Activated CD4-positive, alpha-beta T cell treated with anti-CD3 and anti-CD28 coated beads for 36 hours (primary cell): ENCODE measurements at regions of chr19 and their contacts with region 1.

Region 1: DNA sequence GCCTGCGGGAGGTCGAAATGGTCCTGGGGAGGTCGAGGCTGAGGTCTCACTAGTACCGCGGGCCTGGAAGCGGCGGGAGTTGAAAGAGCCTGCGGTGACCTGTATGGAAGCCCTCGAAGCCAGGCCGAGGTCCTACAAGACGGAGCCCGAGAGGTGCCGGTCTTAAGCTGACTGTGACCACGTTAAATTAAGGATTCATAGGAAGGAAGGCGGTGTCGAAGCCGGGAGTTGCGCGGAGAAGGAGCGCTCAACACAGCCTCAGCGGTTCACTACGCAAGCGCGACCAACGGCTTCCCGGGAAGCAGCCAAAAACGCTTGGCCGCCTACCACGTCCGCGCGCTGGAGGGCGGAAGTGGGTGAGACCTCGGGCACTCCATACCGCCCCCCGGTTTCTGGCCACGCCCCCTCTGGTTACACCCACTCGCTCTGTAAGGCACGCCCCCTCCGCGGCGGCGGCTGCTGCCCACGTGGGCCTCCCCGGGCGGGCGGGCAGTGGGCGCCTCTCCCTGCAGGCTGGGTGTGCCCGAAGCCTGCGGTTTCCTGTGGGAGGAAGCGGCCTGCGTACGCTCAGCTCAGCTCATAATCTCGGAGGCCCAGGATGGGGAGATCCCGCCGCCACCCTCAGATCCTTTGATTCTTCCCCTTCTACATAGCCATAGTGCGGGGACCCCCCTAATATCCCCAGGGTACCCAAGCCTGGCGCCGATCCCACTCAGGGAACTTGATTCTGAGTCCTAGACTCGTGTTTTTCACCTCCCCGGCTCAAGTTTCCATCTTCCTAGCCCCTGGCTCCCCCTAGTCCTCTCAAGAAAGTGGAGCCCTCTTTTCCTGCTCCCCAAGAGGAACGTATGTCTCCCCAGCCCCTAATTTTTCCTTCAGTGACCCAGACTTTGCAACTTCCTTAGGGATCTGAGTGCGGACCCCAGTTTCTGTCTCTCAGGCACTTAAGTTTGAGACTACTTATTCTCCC is 3.4 kb upstream of the EMP3 start:
- DNase-seq: peak; percentile 99
- ATAC-seq: peak; percentile 68
- H3K4me3 Mint-ChIP-seq: peak overlapping the region; percentile 82
- H3K27ac Mint-ChIP-seq: peak overlapping the region; percentile 97
- H3K4me1 Mint-ChIP-seq: peaks cover 56% of the 10 kb centered on the region
- H3K27me3 Mint-ChIP-seq: no peaks in the 10 kb centered on the region

Region 2: GRCh38 chr19:47600246-47601179 is 721.4 kb before region 1 on chr19:
- CTCF ChIA-PET with region 1: no interaction called
- POLR2A ChIA-PET with region 1: no interaction called
- intact Hi-C with region 1: loop called in 1 of 2 experiments (anchors 10 kb)
- DNase-seq: peak; percentile 100
- ATAC-seq: peak; percentile 98
- H3K4me3 Mint-ChIP-seq: peak overlapping the region; percentile 79
- H3K27ac Mint-ChIP-seq: peak overlapping the region; percentile 89
- H3K4me1 Mint-ChIP-seq: peaks cover 31% of the 10 kb centered on the region
- H3K27me3 Mint-ChIP-seq: no peaks in the 10 kb centered on the region

Region 3: GRCh38 chr19:47707135-47707925 is 614.6 kb before region 1 on chr19:
- CTCF ChIA-PET with region 1: no interaction called
- POLR2A ChIA-PET with region 1: no interaction called
- intact Hi-C with region 1: no loop called
- DNase-seq: peak; percentile 91
- ATAC-seq: peak; percentile 99
- H3K4me3 Mint-ChIP-seq: no peak overlapping the region
- H3K27ac Mint-ChIP-seq: no peak overlapping the region
- H3K4me1 Mint-ChIP-seq: peaks cover 5% of the 10 kb centered on the region
- H3K27me3 Mint-ChIP-seq: peaks cover 8% of the 10 kb centered on the region

Region 4: GRCh38 chr19:48061401-48062344 is 260.2 kb before region 1 on chr19:
- CTCF ChIA-PET with region 1: no interaction called
- POLR2A ChIA-PET with region 1: no interaction called
- intact Hi-C with region 1: no loop called
- DNase-seq: no peak
- ATAC-seq: no peak
- H3K4me3 Mint-ChIP-seq: no peak overlapping the region
- H3K27ac Mint-ChIP-seq: no peak overlapping the region
- H3K4me1 Mint-ChIP-seq: no peaks in the 10 kb centered on the region
- H3K27me3 Mint-ChIP-seq: no peaks in the 10 kb centered on the region

Region 5: GRCh38 chr19:48255376-48256303 is 66.3 kb before region 1 on chr19 and contains the start of gene CARD8:
- CTCF ChIA-PET with region 1: interaction called, 3 read pairs
- POLR2A ChIA-PET with region 1: interaction called, 5 read pairs
- intact Hi-C with region 1: loop called in 1 of 2 experiments (anchors 2 kb)
- DNase-seq: peak; percentile 89
- ATAC-seq: peak; percentile 89
- H3K4me3 Mint-ChIP-seq: peak within 1 kb of the TSS; percentile 92
- H3K27ac Mint-ChIP-seq: peak within 1 kb of the TSS; percentile 98
- H3K4me1 Mint-ChIP-seq: peaks cover 63% of the 10 kb centered on the region
- H3K27me3 Mint-ChIP-seq: no peaks in the 10 kb centered on the region
- total RNA-seq, gene CARD8: 109 to 118 TPM

Region 6: GRCh38 chr19:48398375-48399235 is 76.7 kb after region 1 on chr19:
- CTCF ChIA-PET with region 1: interaction called, 3 read pairs
- POLR2A ChIA-PET with region 1: no interaction called
- intact Hi-C with region 1: loop called (anchors 1 to 5 kb)
- DNase-seq: peak; percentile 94
- ATAC-seq: peak; percentile 68
- H3K4me3 Mint-ChIP-seq: peak overlapping the region; percentile 83
- H3K27ac Mint-ChIP-seq: no peak overlapping the region
- H3K4me1 Mint-ChIP-seq: peaks cover 29% of the 10 kb centered on the region
- H3K27me3 Mint-ChIP-seq: peaks cover 31% of the 10 kb centered on the region

Region 7: DNA sequence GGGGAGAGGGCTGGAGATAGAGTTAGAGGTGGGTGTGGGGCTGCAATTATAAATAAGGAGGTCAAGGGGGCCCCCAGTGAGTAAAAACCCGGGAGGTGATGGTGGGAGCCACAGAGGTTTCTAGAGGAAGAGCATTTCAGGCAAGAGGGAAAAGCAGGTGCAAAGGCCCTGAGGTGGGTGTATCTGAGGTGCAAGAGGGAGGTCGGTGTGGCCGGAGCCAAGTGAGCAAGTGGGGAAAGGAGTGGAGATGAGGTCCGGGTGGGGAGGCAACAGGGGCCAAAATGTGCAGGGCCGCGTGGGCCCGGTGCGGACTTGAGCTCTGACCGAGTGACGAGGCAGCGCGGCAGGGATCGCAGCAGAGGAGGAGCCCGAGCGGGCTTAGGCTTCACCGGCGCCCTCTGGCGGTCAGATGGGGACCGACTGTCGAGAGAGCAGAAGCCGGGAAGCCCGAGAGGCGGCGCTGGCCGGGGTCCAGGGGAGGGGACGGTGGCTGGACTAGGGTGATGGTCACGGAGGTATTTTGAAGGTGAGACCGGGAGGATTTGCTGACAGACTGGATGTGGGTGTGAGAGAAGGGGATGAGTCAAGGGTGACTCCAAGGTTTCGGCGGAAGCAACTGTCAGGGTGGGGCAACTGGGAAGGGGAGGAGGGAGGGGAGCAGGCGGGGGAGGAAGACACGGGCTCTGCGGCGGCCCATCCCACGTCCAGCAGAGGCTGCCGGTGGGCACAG is 266.9 kb after region 1 on chr19:
- CTCF ChIA-PET with region 1: interaction called, 3 read pairs
- POLR2A ChIA-PET with region 1: no interaction called
- intact Hi-C with region 1: loop called (anchors 2 to 10 kb)
- DNase-seq: peak; percentile 94
- ATAC-seq: peak; percentile 89
- H3K4me3 Mint-ChIP-seq: peak overlapping the region; percentile 35
- H3K27ac Mint-ChIP-seq: peak overlapping the region; percentile 43
- H3K4me1 Mint-ChIP-seq: peaks cover 15% of the 10 kb centered on the region
- H3K27me3 Mint-ChIP-seq: no peaks in the 10 kb centered on the region

Region 8: DNA sequence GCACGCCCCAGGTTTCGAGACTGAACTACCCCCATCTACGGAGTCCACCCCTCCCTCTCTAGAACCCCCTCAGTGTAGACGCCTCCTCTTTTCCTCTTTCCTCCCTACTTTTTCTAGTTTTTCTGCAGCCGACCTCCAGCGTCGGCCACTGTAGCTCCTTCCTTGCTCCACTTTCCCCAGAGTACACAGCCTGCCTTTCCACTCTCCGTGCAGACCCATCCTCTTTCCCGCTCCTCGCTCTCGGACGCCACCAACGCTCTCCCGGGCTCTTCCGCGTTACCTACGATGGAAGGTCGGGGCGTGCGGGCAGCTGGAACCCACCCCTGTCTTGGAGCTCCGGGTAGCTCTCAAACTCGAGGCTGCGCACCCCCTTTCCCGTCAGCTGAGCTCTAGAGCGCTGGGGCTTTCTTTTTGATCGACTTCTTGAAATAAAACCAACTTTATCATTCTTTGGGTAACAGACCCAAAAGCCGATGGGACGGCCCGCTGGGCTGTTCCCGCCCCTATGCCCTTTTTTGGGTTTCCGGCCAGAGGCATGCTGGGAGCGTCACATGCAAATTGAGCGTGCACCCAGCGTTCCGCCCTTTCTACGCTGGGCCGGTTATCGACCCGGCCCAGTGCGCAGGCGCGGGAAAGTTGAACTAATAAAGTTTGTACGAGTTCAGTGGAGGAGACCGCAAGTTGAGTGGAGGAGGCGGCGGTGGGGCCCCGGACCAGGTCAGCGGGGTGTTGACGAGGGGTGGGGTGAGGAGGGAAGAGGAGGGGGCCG is 1343.6 kb after region 1 on chr19 and contains the starts of genes BCL2L12 and IRF3:
- CTCF ChIA-PET with region 1: no interaction called
- POLR2A ChIA-PET with region 1: no interaction called
- intact Hi-C with region 1: loop called in 1 of 2 experiments (anchors 10 kb)
- DNase-seq: peak; percentile 100
- ATAC-seq: peak; percentile 86
- H3K4me3 Mint-ChIP-seq: peak within 1 kb of the TSS; percentile 96
- H3K27ac Mint-ChIP-seq: peak within 1 kb of the TSS; percentile 92
- H3K4me1 Mint-ChIP-seq: peaks cover 29% of the 10 kb centered on the region
- H3K27me3 Mint-ChIP-seq: no peaks in the 10 kb centered on the region
- total RNA-seq, gene BCL2L12: 79.6 to 93.8 TPM
- total RNA-seq, gene IRF3: 123 to 125 TPM